Heart left ventricle (tissue), 16 donors: ENCODE measurements at regions of chr13 and their contacts with region 1.

Region 1: GRCh38 chr13:53520132-53520531 is 491.5 kb downstream of the OLFM4 start:
- DNase-seq: no peak
- ATAC-seq: no peak
- H3K4me3 ChIP-seq: no peak overlapping the region
- H3K27ac ChIP-seq: no peak overlapping the region
- H3K4me1 ChIP-seq: no peaks in the 10 kb centered on the region
- H3K27me3 ChIP-seq: no peaks in the 10 kb centered on the region
- CTCF ChIP-seq: no peak
- POLR2A ChIP-seq: no peak

Region 2: DNA sequence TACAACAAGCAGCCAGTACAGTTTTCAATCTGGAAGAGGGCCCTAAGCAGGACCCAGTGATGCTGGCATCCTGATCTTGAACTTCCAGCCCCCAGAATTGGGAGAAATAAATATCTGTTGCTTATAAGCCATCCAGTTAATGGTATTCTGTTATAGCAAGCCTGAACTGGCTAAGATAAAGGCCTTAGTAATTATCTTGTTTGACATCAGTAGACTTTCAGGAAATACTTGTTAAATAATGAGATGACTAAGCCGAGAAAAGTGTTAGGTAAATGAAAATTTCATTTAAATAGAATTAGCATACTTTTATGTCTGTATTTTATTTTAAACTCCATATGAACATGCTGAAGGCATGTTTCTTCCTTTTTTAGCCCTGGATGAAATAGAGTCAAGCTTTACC is 303.4 kb before region 1 on chr13:
- intact Hi-C with region 1: no loop called
- DNase-seq: no peak
- ATAC-seq: no peak
- H3K4me3 ChIP-seq: no peak overlapping the region
- H3K27ac ChIP-seq: no peak overlapping the region
- H3K4me1 ChIP-seq: no peaks in the 10 kb centered on the region
- H3K27me3 ChIP-seq: peaks cover 0 to 4% (median 0%) of the 10 kb centered on the region in 9 donors
- CTCF ChIP-seq: no peak
- POLR2A ChIP-seq: no peak

Region 3: GRCh38 chr13:53474878-53475277 is 45.3 kb before region 1 on chr13:
- intact Hi-C with region 1: loop called in 1 of 10 experiments (anchors 5 kb)
- DNase-seq: no peak
- ATAC-seq: no peak
- H3K4me3 ChIP-seq: no peak overlapping the region
- H3K27ac ChIP-seq: no peak overlapping the region
- H3K4me1 ChIP-seq: no peaks in the 10 kb centered on the region
- H3K27me3 ChIP-seq: no peaks in the 10 kb centered on the region
- CTCF ChIP-seq: no peak
- POLR2A ChIP-seq: no peak

Region 4: GRCh38 chr13:53569453-53569852 is 49.3 kb after region 1 on chr13:
- intact Hi-C with region 1: no loop called
- DNase-seq: no peak
- ATAC-seq: no peak
- H3K4me3 ChIP-seq: no peak overlapping the region
- H3K27ac ChIP-seq: no peak overlapping the region
- H3K4me1 ChIP-seq: no peaks in the 10 kb centered on the region
- H3K27me3 ChIP-seq: no peaks in the 10 kb centered on the region
- CTCF ChIP-seq: no peak
- POLR2A ChIP-seq: no peak

Region 5: DNA sequence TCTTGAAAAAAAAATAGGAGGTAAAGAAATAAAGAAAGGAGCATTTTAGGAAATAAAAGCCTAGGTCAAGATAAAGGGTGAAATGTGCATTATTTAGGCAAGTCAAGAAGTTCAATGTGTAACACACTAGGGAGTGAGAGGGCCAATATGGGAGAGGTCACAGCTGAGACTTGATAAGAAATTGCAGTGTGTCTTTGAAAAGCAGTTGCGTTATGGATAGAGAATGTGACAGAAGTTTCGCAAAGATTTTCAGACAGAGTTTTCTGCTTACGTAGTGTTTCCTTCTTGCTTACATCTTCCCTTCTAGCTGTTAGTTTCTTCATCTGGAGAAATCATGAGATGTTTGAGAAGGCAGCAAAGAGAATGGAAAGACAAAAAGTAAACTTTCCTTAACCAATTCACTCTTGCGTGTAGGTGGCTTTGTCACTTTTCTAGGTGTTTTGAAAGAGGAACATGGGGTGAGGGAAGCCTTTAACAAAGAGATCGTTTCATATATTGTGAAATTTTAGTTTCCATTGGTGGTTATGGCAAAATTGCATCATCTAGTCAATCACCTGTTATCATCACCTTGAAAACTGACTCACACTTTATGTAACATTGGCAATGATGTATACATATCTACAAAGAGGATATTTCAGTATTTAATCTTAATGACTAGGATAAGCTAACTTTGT is 484.0 kb after region 1 on chr13:
- intact Hi-C with region 1: no loop called
- DNase-seq: no peak
- ATAC-seq: no peak
- H3K4me3 ChIP-seq: no peak overlapping the region
- H3K27ac ChIP-seq: no peak overlapping the region
- H3K4me1 ChIP-seq: no peaks in the 10 kb centered on the region
- H3K27me3 ChIP-seq: no peaks in the 10 kb centered on the region
- CTCF ChIP-seq: no peak
- POLR2A ChIP-seq: no peak